Aorta (tissue), 5 donors: ENCODE measurements at regions of chr5 and their contacts with region 1.

Region 1: DNA sequence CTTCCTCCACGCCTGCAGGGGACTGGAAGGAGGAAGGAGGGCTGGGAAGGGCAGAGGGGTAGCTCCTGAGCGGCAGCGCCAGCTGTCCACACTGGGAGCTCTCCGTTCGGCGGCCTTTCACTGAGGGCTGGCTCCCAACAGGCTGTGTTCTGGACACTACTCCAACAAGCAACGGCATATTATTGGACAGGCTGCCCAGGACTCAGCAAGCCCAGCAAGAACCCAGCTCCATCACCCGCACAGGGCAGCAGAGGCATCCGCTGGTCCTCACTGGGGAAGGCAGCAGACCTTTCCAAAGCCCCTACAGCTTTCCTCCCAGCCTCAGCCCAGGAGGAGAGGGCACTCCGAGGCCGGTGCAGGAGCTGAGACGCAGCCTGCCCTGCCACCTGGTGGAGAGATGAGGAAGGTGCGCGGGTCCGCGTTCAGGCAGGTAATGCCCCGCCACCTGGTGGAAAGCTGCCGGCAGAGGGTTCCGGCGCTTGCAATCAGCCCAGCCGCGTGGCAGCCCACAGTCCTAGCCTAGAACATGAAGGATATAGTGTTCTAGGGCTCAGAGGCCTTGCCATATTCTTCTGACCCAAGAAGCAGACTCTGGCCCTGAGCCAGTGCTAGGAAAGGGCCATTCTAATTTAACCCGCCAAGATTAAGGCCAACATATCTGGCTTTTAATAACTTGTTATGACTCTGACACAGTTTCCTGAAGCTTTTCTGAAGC is 74.4 kb downstream of the NRG2 start:
- DNase-seq: peak; percentile 82 to 95
- ATAC-seq: peak; percentile 93
- H3K4me3 ChIP-seq: no peak overlapping the region
- H3K27ac ChIP-seq: no peak overlapping the region
- H3K4me1 ChIP-seq: peaks cover 0 to 1% of the 10 kb centered on the region in 2 donors
- H3K27me3 ChIP-seq: no peaks in the 10 kb centered on the region

Region 2: GRCh38 chr5:139863855-139864558 is 104.7 kb before region 1 on chr5:
- intact Hi-C with region 1: loop called in 1 of 2 experiments (anchors 5 kb)
- DNase-seq: peak; percentile 69 to 87
- ATAC-seq: peak; percentile 69
- H3K4me3 ChIP-seq: no peak overlapping the region
- H3K27ac ChIP-seq: no peak overlapping the region
- H3K4me1 ChIP-seq: no peaks in the 10 kb centered on the region
- H3K27me3 ChIP-seq: no peaks in the 10 kb centered on the region

Region 3: DNA sequence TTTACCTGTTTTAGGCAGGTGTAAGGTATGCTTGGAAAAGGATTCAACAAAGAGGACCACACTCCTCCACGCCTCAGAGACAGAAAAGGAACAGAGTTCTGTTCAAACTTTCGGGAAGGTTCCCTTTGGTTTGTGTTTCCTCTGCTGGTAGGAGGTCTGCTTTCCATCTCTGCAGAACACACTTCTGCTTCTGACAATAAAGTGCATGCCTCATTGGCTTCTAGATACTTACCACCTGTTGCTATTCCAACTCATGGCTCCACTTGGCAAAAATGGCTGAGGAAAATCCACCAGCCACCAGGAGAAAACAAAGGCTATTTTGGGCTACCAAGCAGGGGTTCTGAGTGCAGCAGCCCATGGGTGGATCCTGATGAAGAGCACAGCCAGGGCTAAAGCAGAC is 38.3 kb before region 1 on chr5:
- intact Hi-C with region 1: no loop called
- DNase-seq: no peak
- ATAC-seq: no peak
- H3K4me3 ChIP-seq: no peak overlapping the region
- H3K27ac ChIP-seq: no peak overlapping the region
- H3K4me1 ChIP-seq: no peaks in the 10 kb centered on the region
- H3K27me3 ChIP-seq: no peaks in the 10 kb centered on the region